Esophagus muscularis mucosa (tissue), 4 donors: ENCODE measurements at regions of chr12 and their contacts with region 1.

Region 1: DNA sequence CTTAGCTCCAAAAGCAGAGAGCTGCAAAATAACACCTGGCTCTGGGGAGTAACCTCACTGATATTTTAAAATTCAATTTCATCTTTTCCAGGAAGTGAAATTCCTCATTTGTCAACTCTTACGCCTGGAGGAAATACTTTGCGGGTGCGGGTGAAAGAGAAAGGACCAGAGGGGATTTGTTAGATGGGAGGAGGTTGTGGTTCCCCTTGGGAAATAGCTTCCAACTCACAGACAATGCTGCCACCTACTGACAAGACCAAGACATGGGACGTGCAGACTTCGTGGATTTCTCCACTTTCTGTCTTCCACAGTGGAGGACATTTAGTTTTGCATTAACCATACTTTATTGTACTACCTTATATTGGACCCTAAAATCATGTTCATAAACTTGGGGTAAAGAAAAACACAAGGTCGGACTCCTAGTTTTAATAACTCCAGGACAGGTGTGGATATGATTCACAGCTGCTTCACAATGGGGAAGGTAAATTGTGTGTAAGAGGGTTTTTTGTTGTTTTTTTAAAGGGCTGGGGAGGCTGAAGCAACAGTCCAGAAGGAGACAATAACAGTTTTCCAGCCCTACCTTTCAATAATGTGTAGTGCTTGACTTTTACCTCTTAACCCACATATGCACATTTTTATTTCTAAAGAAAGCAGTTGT is 10.8 kb downstream of the FBXL14 start:
- DNase-seq: no peak
- H3K4me3 ChIP-seq: peak overlapping the region; percentile 26 to 41 (median 30)
- H3K27ac ChIP-seq: no peak overlapping the region
- H3K4me1 ChIP-seq: peaks cover 14 to 67% (median 65%) of the 10 kb centered on the region in 4 donors
- H3K27me3 ChIP-seq: no peaks in the 10 kb centered on the region
- CTCF ChIP-seq: peak; percentile 87 to 91 (median 88)
- EP300 ChIP-seq: no peak
- POLR2A ChIP-seq: no peak

Region 2: GRCh38 chr12:990661-991349 is 592.7 kb before region 1 on chr12 and contains the start of gene ERC1:
- intact Hi-C with region 1: loop called (anchors 10 kb)
- DNase-seq: peak; percentile 96
- H3K4me3 ChIP-seq: peak within 1 kb of the TSS; percentile 88 to 99 (median 98)
- H3K27ac ChIP-seq: peak within 1 kb of the TSS; percentile 95 to 99 (median 99)
- H3K4me1 ChIP-seq: peaks cover 31 to 59% (median 57%) of the 10 kb centered on the region in 4 donors
- H3K27me3 ChIP-seq: no peaks in the 10 kb centered on the region
- CTCF ChIP-seq: peak in 1 of 3 experiments; percentile 15
- EP300 ChIP-seq: no peak
- POLR2A ChIP-seq: peak; percentile 19
- total RNA-seq, gene ERC1: 50.0 to 88.1 (median 59.7) TPM

Region 3: GRCh38 chr12:1117970-1118563 is 465.5 kb before region 1 on chr12:
- intact Hi-C with region 1: loop called (anchors 2 kb)
- DNase-seq: no peak
- H3K4me3 ChIP-seq: no peak overlapping the region
- H3K27ac ChIP-seq: no peak overlapping the region
- H3K4me1 ChIP-seq: peaks cover 0 to 6% (median 1%) of the 10 kb centered on the region in 4 donors
- H3K27me3 ChIP-seq: no peaks in the 10 kb centered on the region
- CTCF ChIP-seq: peak; percentile 92 to 95 (median 93)
- EP300 ChIP-seq: no peak
- POLR2A ChIP-seq: no peak

Region 4: GRCh38 chr12:2179953-2180736 is 596.6 kb after region 1 on chr12:
- intact Hi-C with region 1: no loop called
- DNase-seq: no peak
- H3K4me3 ChIP-seq: no peak overlapping the region
- H3K27ac ChIP-seq: peak overlapping the region; percentile 75 to 89 (median 78)
- H3K4me1 ChIP-seq: peaks cover 54 to 93% (median 80%) of the 10 kb centered on the region in 4 donors
- H3K27me3 ChIP-seq: no peaks in the 10 kb centered on the region
- CTCF ChIP-seq: peak in 1 of 3 experiments; percentile 8
- EP300 ChIP-seq: peak; percentile 45
- POLR2A ChIP-seq: no peak